Mammary epithelial cell (primary cell): ENCODE measurements at regions of chr12 and their contacts with region 1.

Region 1: GRCh38 chr12:14365294-14366208 is at the start of gene ATF7IP:
- DNase-seq: peak; percentile 95
- H3K4me3 ChIP-seq: peak within 1 kb of the TSS; percentile 76 to 100 (median 78)
- H3K27ac ChIP-seq: peak within 1 kb of the TSS; percentile 95
- H3K4me1 ChIP-seq: no peaks in the 10 kb centered on the region
- H3K27me3 ChIP-seq: no peaks in the 10 kb centered on the region
- CTCF ChIP-seq: peak; percentile 7 to 36
- total RNA-seq, gene ATF7IP: 33.3 to 41.0 TPM

Region 2: GRCh38 chr12:12999959-13000615 is 1365.5 kb before region 1 on chr12 and contains the start of gene HEBP1:
- CTCF ChIA-PET with region 1: no interaction called
- dilution Hi-C with region 1: no loop called
- in situ Hi-C with region 1: no loop called
- intact Hi-C with region 1: loop called (anchors 5 kb)
- DNase-seq: peak; percentile 86
- H3K4me3 ChIP-seq: peak within 1 kb of the TSS; percentile 81 to 94 (median 82)
- H3K27ac ChIP-seq: peak within 1 kb of the TSS; percentile 72
- H3K4me1 ChIP-seq: peaks cover 19% of the 10 kb centered on the region
- H3K27me3 ChIP-seq: no peaks in the 10 kb centered on the region
- CTCF ChIP-seq: no peak
- total RNA-seq, gene HEBP1: 13.5 to 36.5 TPM

Region 3: DNA sequence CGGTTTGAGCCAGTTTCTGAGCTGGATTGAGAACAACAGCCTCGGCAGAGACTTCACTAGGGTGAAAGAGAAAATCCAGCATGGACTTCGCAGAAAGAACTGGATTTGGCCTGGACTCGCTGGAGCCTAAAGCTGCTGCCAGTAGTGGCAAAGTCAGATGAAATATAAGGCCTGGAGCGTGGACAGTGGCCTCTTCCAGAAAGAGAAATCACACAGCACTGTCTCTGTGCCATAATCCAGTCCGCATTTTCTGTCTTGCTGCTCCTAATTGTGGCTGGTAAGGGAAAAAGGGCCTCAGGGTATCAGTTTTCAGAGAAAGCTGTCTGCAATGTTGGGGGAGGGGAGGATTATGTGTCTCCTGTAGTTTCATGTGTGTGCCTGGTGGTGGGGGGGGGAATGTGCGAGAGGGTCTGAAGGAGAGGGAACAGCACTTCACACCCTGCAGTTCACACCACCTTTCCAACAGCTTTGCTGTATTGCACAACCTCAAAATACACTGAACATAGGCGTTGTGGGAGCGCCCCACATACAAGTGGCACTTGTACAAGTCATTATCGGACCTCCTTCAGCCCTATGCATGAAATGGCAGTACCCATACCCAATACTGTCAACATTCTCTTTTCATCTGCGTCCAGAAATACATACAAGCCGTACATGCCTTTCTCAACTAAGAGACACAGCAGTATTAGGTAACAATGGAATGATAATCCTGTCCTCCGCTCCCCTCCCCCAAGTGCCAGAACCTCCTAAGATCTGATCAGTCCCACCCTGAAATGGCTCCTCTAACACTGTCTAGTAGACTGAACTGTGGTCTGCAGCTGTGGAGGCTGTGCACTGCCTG is 107.6 kb before region 1 on chr12:
- CTCF ChIA-PET with region 1: no interaction called
- dilution Hi-C with region 1: no loop called
- in situ Hi-C with region 1: loop called (anchors 10 to 25 kb)
- intact Hi-C with region 1: loop called (anchors 1 kb)
- DNase-seq: peak; percentile 96
- H3K4me3 ChIP-seq: no peak overlapping the region
- H3K27ac ChIP-seq: peak overlapping the region; percentile 69
- H3K4me1 ChIP-seq: peaks cover 32% of the 10 kb centered on the region
- H3K27me3 ChIP-seq: no peaks in the 10 kb centered on the region
- CTCF ChIP-seq: no peak

Region 4: GRCh38 chr12:14403711-14404196 is 38.2 kb after region 1 on chr12:
- CTCF ChIA-PET with region 1: no interaction called
- dilution Hi-C with region 1: no loop called
- in situ Hi-C with region 1: no loop called
- intact Hi-C with region 1: loop called (anchors 5 kb)
- DNase-seq: peak; percentile 59
- H3K4me3 ChIP-seq: no peak overlapping the region
- H3K27ac ChIP-seq: peak overlapping the region; percentile 63
- H3K4me1 ChIP-seq: peaks cover 19% of the 10 kb centered on the region
- H3K27me3 ChIP-seq: no peaks in the 10 kb centered on the region
- CTCF ChIP-seq: no peak

Region 5: DNA sequence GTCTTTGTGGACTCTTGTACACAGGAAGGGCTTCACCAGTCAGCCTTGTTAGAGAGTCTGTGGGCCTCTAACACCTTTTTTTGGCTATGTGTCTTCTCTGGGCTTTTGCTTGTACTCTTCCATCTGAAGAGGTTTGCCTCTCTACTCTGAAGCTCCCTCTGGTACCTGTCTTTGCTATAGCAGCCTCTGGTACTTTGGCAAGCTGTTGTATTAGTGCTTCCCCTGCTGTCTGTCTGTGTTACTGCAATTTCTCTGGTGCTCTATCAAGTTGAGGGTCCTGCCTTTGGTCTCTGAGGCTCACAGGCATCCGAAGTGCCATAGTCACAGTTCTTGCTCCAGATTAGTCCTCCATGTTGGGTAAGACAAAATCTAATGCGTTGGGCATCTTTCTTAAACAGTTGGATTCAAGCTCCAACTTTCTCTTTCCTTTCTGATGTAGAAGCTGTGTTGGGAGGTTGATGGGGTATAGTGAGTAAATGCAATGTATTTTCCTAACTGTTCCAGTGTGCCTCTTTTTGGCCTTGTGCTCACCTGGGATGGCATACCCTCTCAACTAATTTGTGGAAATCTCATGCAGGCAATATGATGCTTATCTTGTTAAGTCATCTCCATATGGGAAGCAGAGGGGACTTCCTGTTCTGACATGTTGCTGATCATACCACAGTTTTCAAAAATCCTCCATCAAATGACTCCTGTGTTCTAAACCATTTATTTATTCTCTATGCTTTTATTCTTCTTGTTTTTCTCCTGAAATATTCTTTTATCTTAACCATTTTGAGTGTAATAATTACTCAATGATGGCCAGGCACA is 88.8 kb after region 1 on chr12:
- CTCF ChIA-PET with region 1: no interaction called
- dilution Hi-C with region 1: no loop called
- in situ Hi-C with region 1: no loop called
- intact Hi-C with region 1: loop called (anchors 1 kb)
- DNase-seq: peak; percentile 44
- H3K4me3 ChIP-seq: no peak overlapping the region
- H3K27ac ChIP-seq: no peak overlapping the region
- H3K4me1 ChIP-seq: no peaks in the 10 kb centered on the region
- H3K27me3 ChIP-seq: no peaks in the 10 kb centered on the region
- CTCF ChIP-seq: peak; percentile 75 to 77